ENCODE measurements at regions of chr4 and their contacts with region 1.

Region 1: GRCh38 chr4:87465739-87466366 is 43.5 kb downstream of the NUDT9 start:
- DNase-seq: peak in 1 of 2 experiments; percentile 38
- H3K4me3 ChIP-seq: no peak overlapping the region
- H3K4me3 Mint-ChIP-seq: no peak overlapping the region
- H3K27ac Mint-ChIP-seq: no peak overlapping the region
- H3K4me1 ChIP-seq: peaks cover 5% of the 10 kb centered on the region; the same call in 1 of the 2 replicates
- H3K4me1 Mint-ChIP-seq: no peaks in the 10 kb centered on the region
- H3K27me3 ChIP-seq: no peaks in the 10 kb centered on the region
- H3K27me3 Mint-ChIP-seq: no peaks in the 10 kb centered on the region
- CTCF ChIP-seq: peak; percentile 25 to 38

Region 2: DNA sequence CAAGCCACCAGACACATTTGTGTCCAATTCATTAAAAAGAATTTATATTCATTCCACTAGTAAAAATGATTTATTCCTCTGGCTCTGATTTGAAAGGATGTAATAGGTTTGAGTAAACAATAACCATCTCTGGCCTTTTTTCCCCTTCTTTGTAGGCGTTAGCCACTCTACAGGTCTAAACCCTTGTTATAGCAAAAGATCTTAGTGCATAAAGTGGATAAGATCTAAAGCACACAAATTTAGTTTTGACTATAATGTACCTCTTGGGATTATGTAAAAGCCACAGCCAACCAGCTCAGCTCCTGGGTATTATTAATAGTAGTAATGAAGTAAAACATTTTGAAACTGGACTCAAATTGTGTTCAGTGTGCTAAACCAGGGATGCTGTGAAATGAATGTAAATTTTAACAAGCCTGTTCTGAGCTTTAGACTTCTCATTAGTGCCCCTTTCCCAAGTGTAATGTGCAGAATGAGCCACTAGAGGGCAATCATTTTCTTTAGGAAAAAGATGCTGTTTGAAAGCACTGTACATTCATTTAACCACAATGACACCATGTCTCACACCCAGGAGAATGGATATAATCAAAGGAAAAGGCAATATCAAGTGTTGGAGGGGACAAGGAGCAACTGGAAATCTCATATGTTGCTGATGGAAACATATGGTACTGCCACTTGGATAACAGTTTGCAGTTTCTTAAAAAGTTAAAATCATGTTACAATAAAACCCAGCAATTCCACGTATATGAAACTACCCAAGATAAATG is 315.2 kb before region 1 on chr4:
- CTCF ChIA-PET with region 1: no interaction called
- POLR2A ChIA-PET with region 1: no interaction called
- intact Hi-C with region 1: loop called (anchors 5 kb)
- DNase-seq: peak; percentile 42 to 75
- H3K4me3 ChIP-seq: no peak overlapping the region
- H3K4me3 Mint-ChIP-seq: peak overlapping the region; percentile 19
- H3K27ac Mint-ChIP-seq: peak overlapping the region; percentile 21
- H3K4me1 ChIP-seq: peaks cover 8% of the 10 kb centered on the region
- H3K4me1 Mint-ChIP-seq: peaks cover 31% of the 10 kb centered on the region
- H3K27me3 ChIP-seq: no peaks in the 10 kb centered on the region
- H3K27me3 Mint-ChIP-seq: no peaks in the 10 kb centered on the region
- CTCF ChIP-seq: peak; percentile 78 to 88

Region 3: DNA sequence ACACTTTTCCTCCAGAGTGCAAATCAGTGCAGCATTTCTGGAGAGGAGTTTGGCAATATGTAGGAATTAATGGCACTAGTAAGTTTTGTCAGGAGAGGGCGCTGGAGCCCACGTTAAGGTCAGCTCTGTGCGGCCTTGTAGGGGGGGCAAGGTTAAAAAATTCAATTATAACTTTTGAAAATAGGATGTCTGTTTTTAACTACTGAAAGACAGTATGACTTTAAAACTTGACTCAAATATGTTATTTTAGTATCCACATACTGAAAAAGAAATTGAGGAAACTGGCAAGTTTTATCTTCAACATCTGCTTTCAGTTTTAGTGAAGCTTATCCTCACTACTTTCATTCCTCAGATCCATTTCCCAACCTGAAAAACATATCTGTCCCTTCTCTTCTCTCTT is 112.3 kb before region 1 on chr4:
- CTCF ChIA-PET with region 1: no interaction called
- POLR2A ChIA-PET with region 1: no interaction called
- intact Hi-C with region 1: loop called (anchors 5 kb)
- DNase-seq: peak in 1 of 2 experiments; percentile 45
- H3K4me3 ChIP-seq: no peak overlapping the region
- H3K4me3 Mint-ChIP-seq: no peak overlapping the region
- H3K27ac Mint-ChIP-seq: no peak overlapping the region
- H3K4me1 ChIP-seq: peaks cover 9% of the 10 kb centered on the region; the same call in 1 of the 2 replicates
- H3K4me1 Mint-ChIP-seq: no peaks in the 10 kb centered on the region
- H3K27me3 ChIP-seq: no peaks in the 10 kb centered on the region
- H3K27me3 Mint-ChIP-seq: no peaks in the 10 kb centered on the region
- CTCF ChIP-seq: peak in 1 of 2 experiments; percentile 43

Region 4: GRCh38 chr4:87390891-87391575 is 74.8 kb before region 1 on chr4 and contains the start of gene HSD17B11:
- CTCF ChIA-PET with region 1: interaction called, 3 read pairs
- POLR2A ChIA-PET with region 1: no interaction called
- intact Hi-C with region 1: loop called (anchors 5 kb)
- DNase-seq: peak; percentile 85 to 90
- H3K4me3 ChIP-seq: peak within 1 kb of the TSS; percentile 53
- H3K4me3 Mint-ChIP-seq: peak within 1 kb of the TSS; percentile 87
- H3K27ac Mint-ChIP-seq: peak within 1 kb of the TSS; percentile 92
- H3K4me1 ChIP-seq: peaks cover 11% of the 10 kb centered on the region; the same call in 1 of the 2 replicates
- H3K4me1 Mint-ChIP-seq: peaks cover 18% of the 10 kb centered on the region
- H3K27me3 ChIP-seq: no peaks in the 10 kb centered on the region
- H3K27me3 Mint-ChIP-seq: no peaks in the 10 kb centered on the region
- CTCF ChIP-seq: no peak
- total RNA-seq, gene HSD17B11: 39.3 and 42.8 TPM in 2 replicates

Region 5: DNA sequence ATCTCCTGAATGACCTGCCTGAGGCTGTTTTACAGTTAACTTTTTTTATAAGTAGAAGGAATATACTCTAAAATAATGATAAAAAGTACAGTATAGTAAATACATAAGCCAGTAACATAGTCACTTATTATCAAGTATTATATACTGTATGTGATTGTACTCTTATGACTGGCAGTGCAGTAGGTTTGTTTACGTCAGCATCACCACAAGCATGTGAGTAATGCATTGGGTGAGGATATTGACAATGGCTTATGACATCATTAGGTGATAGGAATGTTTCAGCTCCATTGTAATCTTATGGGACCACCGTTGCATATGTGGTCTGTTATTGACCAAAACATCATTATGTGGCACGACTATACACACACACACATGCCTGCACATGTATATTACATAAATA is 23.0 kb before region 1 on chr4:
- CTCF ChIA-PET with region 1: no interaction called
- POLR2A ChIA-PET with region 1: no interaction called
- intact Hi-C with region 1: loop called (anchors 2 kb)
- DNase-seq: no peak
- H3K4me3 ChIP-seq: no peak overlapping the region
- H3K4me3 Mint-ChIP-seq: no peak overlapping the region
- H3K27ac Mint-ChIP-seq: no peak overlapping the region
- H3K4me1 ChIP-seq: no peaks in the 10 kb centered on the region
- H3K4me1 Mint-ChIP-seq: peaks cover 14% of the 10 kb centered on the region
- H3K27me3 ChIP-seq: no peaks in the 10 kb centered on the region
- H3K27me3 Mint-ChIP-seq: no peaks in the 10 kb centered on the region
- CTCF ChIP-seq: no peak

Region 6: DNA sequence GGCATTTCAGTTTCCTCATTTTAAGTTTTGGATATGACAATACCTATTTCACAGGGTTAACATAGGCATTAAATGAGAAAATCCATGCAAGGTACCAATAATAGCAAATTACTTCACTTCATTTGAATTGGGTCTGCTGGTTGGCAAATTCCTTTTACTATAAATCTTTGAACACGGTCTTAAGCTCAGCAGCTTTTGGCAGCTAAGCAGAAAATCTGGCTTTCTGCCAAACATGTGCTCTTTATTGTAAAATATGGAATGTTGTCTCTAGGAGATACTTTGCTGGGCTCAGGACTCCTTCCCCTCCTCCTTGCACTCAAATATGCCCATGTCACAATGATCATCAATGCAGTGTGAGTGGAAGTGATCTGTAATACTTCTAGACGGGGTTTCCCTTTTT is 167.4 kb after region 1 on chr4:
- CTCF ChIA-PET with region 1: no interaction called
- POLR2A ChIA-PET with region 1: no interaction called
- intact Hi-C with region 1: no loop called
- DNase-seq: no peak
- H3K4me3 ChIP-seq: no peak overlapping the region
- H3K4me3 Mint-ChIP-seq: no peak overlapping the region
- H3K27ac Mint-ChIP-seq: no peak overlapping the region
- H3K4me1 ChIP-seq: no peaks in the 10 kb centered on the region
- H3K4me1 Mint-ChIP-seq: no peaks in the 10 kb centered on the region
- H3K27me3 ChIP-seq: no peaks in the 10 kb centered on the region
- H3K27me3 Mint-ChIP-seq: peaks cover 5% of the 10 kb centered on the region
- CTCF ChIP-seq: no peak